ENCODE measurements at regions of chr6 and their contacts with region 1.

Region 1: GRCh38 chr6:107489636-107490565 is at the start of gene SOBP:
- DNase-seq: peak; percentile 77
- ATAC-seq: peak; percentile 65
- H3K4me3 ChIP-seq: peak within 1 kb of the TSS; percentile 51 to 78 (median 75)
- H3K4me3 Mint-ChIP-seq: peak within 1 kb of the TSS; percentile 93
- H3K27ac ChIP-seq: no peak within 1 kb of the TSS
- H3K27ac Mint-ChIP-seq: peak within 1 kb of the TSS; percentile 57
- H3K4me1 ChIP-seq: peaks cover 33 to 40% of the 10 kb centered on the region in 2 donors
- H3K4me1 Mint-ChIP-seq: peaks cover 32% of the 10 kb centered on the region
- H3K27me3 ChIP-seq: peaks cover 4 to 63% (median 49%) of the 10 kb centered on the region in 4 experiments
- H3K27me3 Mint-ChIP-seq: peaks cover 31% of the 10 kb centered on the region
- CTCF ChIP-seq: no peak
- total RNA-seq, gene SOBP: 1.3 and 1.5 TPM in 2 replicates

Region 2: DNA sequence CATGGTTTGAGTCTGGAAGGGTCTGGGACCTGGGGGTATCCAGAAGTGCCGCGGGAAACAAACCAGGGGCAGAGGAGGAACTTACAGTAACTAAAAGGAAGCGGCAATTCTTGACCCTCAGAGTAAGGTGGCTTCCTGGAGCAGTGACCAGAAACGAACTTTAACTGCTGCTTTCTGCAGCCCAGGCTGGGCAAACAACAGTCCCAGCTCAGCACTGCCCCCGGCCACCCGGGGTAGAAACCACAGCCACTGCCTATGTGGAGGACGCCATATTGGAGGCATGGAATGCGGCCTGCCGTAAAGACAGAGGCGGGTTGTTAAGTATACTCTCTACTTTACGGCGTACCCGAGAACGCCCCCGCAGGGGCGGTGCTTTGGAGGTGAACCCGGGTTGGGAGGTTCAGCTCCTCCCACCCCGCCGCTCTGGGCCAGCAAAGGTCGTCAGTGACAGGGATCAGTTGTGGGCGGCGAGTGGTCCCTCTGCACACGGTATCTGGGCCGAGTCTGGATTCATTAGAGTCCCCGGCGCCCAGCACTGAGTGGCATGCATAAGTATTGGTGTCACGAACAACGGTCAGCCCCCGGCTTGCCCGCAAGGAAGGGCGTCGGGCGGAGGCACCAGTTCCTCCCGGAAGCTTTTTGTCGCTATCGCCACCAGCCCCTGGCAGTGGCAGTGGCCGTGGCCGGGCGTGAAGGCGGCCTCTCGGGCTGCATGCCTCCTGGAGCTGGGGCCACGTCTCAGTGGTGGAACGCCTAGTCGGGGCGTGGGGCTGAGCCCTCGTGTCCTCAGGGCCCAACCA is 30.4 kb before region 1 on chr6 and contains the start of gene PDSS2:
- CTCF ChIA-PET with region 1: interaction called, 6 read pairs
- POLR2A ChIA-PET with region 1: interaction called, 12 read pairs
- intact Hi-C with region 1: loop called (anchors 1 kb)
- DNase-seq: peak; percentile 96
- ATAC-seq: peak; percentile 96
- H3K4me3 ChIP-seq: peak within 1 kb of the TSS; percentile 70 to 96 (median 93)
- H3K4me3 Mint-ChIP-seq: peak within 1 kb of the TSS; percentile 88
- H3K27ac ChIP-seq: peak within 1 kb of the TSS; percentile 88 to 91
- H3K27ac Mint-ChIP-seq: peak within 1 kb of the TSS; percentile 99
- H3K4me1 ChIP-seq: peaks cover 10 to 13% of the 10 kb centered on the region in 2 donors
- H3K4me1 Mint-ChIP-seq: peaks cover 25% of the 10 kb centered on the region
- H3K27me3 ChIP-seq: no peaks in the 10 kb centered on the region
- H3K27me3 Mint-ChIP-seq: no peaks in the 10 kb centered on the region
- CTCF ChIP-seq: peak; percentile 52
- total RNA-seq, gene PDSS2: 16.9 and 18.3 TPM in 2 replicates

Region 3: DNA sequence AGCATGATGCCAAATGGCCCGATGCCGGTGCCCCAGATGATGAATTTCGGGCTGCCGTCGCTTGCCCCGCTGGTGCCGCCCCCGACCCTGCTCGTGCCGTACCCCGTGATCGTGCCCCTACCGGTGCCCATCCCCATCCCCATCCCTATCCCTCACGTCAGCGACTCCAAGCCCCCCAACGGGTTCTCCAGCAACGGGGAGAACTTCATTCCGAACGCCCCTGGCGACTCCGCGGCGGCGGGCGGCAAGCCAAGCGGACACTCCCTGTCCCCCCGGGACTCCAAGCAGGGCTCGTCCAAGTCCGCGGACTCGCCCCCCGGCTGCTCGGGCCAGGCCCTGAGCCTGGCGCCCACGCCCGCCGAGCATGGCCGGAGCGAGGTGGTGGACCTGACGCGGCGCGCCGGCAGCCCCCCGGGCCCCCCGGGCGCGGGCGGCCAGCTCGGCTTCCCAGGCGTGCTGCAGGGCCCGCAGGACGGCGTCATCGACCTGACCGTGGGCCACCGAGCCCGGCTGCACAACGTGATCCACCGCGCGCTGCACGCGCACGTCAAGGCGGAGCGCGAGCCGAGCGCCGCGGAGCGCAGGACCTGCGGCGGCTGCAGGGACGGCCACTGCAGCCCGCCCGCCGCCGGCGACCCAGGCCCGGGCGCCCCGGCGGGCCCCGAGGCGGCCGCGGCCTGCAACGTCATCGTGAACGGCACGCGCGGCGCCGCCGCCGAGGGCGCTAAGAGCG is 144.6 kb after region 1 on chr6:
- CTCF ChIA-PET with region 1: no interaction called
- POLR2A ChIA-PET with region 1: no interaction called
- intact Hi-C with region 1: loop called (anchors 5 kb)
- DNase-seq: peak; percentile 57
- ATAC-seq: peak; percentile 73
- H3K4me3 ChIP-seq: peak overlapping the region in 4 of 5 experiments; percentile 38 to 56 (median 48)
- H3K4me3 Mint-ChIP-seq: peak overlapping the region; percentile 88
- H3K27ac ChIP-seq: no peak overlapping the region
- H3K27ac Mint-ChIP-seq: peak overlapping the region; percentile 73
- H3K4me1 ChIP-seq: peaks cover 31 to 36% of the 10 kb centered on the region in 2 donors
- H3K4me1 Mint-ChIP-seq: peaks cover 38% of the 10 kb centered on the region
- H3K27me3 ChIP-seq: peaks cover 0 to 23% (median 6%) of the 10 kb centered on the region in 4 experiments
- H3K27me3 Mint-ChIP-seq: peaks cover 23% of the 10 kb centered on the region
- CTCF ChIP-seq: no peak

Measured in B cell (primary cell).